GM10248 (cell line): ENCODE measurements at regions of chr15 and their contacts with region 1.

Region 1: DNA sequence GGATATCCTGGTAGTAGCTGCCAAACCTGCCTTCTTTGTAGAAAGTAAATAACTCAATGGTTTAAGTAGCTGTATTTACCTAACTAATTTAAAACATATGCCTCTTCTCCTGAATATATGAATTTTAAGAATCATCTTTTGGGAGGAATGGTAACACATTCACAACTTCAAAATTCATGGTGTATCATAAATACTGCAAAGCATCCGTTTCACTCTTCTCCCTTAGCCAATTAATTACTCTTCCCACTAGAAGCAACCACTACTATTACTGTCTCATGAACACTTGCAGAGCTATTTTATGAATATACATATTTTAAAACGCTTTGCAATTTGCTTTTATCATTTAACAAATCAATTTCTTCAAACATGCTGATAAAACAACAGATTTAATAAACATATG is 59.0 kb upstream of the USP50 start:
- DNase-seq: no peak
- CTCF ChIP-seq: no peak

Region 2: GRCh38 chr15:50190723-50191122 is 414.7 kb before region 1 on chr15:
- CTCF ChIA-PET with region 1: no interaction called
- POLR2A ChIA-PET with region 1: no interaction called
- DNase-seq: no peak
- CTCF ChIP-seq: no peak

Region 3: DNA sequence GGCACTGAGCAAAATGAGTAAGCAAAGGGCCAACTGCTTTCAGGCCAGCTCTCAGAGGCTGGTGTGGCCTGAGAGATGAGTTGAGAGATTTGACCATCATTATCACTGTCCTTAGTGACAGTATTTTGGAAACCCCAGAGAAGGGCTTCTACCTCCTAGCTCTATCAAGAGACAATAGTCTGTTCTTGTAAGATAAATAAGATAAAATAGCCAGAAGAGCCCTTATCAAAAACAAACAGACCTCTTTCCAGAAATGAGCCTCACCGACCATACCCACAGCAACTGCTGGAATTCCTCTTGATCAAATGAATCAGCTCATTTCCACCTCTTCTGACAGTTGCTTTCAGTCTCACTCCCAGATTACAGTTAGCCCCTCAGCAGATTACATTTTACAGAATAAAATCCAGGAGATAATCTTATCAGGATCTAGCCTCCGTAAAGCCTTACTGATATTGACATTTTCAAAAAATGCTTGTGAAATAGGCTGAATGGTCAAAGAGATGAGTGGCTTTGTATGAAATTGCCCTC is 344.4 kb before region 1 on chr15:
- CTCF ChIA-PET with region 1: no interaction called
- POLR2A ChIA-PET with region 1: interaction called, 10 read pairs
- DNase-seq: peak; percentile 48
- CTCF ChIP-seq: no peak